AG04450 (cell line): ENCODE measurements at regions of chr13 and their contacts with region 1.

Region 1: DNA sequence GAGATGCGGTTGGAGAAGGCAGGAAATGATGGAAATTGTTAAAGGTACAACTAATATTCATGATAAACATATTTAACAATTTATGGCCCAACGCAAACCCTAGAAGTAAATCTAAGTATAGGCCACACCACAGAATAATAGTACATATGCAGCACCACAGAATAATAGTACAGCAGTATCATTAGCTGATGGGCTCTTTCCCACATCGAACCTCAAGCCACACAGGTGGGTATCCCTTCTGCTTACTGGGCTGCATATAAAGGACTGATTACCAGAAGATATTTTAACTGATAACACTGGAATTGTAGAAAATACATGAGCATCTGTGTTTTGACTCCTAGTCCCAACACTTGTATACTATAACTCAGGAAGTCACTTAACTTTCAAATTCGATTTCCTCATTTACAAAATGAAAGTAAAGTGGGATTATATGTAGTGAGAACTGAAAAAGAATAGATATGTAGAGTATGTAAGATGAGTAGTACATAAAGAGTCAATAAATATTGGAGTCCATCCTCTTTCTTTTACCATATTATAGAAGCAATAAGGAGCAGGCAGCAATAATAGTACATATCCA is 91.5 kb downstream of the TSC22D1 start:
- DNase-seq: no peak
- H3K4me3 ChIP-seq: no peak overlapping the region
- H3K27ac ChIP-seq: no peak overlapping the region
- H3K27me3 ChIP-seq: no peaks in the 10 kb centered on the region
- CTCF ChIP-seq: no peak

Region 2: GRCh38 chr13:44470638-44471562 is 13.8 kb before region 1 on chr13:
- CTCF ChIA-PET with region 1: interaction called, 20 read pairs
- POLR2A ChIA-PET with region 1: interaction called, 5 read pairs
- DNase-seq: no peak
- H3K4me3 ChIP-seq: no peak overlapping the region
- H3K27ac ChIP-seq: no peak overlapping the region
- H3K27me3 ChIP-seq: no peaks in the 10 kb centered on the region
- CTCF ChIP-seq: peak; percentile 50

Region 3: GRCh38 chr13:44508562-44509077 is 24.0 kb after region 1 on chr13:
- CTCF ChIA-PET with region 1: interaction called, 14 read pairs
- POLR2A ChIA-PET with region 1: no interaction called
- DNase-seq: no peak
- H3K4me3 ChIP-seq: no peak overlapping the region
- H3K27ac ChIP-seq: no peak overlapping the region
- H3K27me3 ChIP-seq: no peaks in the 10 kb centered on the region
- CTCF ChIP-seq: no peak

Region 4: DNA sequence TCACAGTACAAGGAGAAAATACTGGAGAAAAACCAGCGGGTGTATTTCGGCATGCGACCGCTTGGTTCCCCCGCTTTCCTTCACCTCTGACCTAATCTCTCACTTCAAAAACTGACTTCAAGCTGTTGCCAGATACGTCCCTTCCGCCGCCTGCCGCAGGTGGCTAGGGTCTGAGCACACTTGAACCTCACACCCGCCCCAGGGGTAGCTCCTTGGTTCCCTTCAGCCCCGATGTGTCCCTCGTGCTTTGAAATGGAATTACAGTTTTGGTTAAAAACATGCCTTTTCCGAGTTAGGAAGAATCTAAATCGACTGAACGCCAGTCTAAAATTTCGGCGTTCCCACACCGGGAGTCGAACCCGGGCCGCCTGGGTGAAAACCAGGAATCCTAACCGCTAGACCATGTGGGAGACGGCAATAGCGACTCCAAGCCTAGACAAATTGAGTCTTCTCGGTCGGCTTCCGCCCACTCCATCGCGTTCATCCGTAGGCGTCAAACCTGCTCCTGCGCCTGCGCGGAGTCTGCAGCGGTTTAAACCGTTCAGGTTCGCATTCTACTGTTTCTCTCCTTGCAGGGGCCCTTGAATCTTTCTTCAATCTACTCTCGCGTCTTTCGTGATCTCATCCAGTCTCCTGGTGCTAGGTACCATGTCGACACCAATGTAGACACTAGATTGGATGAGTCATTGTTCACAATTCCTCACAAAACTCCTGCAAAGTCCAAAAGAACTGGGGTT is 433.1 kb after region 1 on chr13:
- CTCF ChIA-PET with region 1: interaction called, 13 read pairs
- POLR2A ChIA-PET with region 1: interaction called, 4 read pairs
- DNase-seq: peak; percentile 94
- H3K4me3 ChIP-seq: peak overlapping the region; percentile 66
- H3K27ac ChIP-seq: peak overlapping the region; percentile 99
- H3K27me3 ChIP-seq: no peaks in the 10 kb centered on the region
- CTCF ChIP-seq: peak; percentile 62

Region 5: GRCh38 chr13:44969551-44970484 is 485.2 kb after region 1 on chr13:
- CTCF ChIA-PET with region 1: interaction called, 129 read pairs
- POLR2A ChIA-PET with region 1: no interaction called
- DNase-seq: peak; percentile 34
- H3K4me3 ChIP-seq: no peak overlapping the region
- H3K27ac ChIP-seq: no peak overlapping the region
- H3K27me3 ChIP-seq: no peaks in the 10 kb centered on the region
- CTCF ChIP-seq: peak; percentile 73